Activated T-helper 1 cell treated with anti-CD3 and anti-CD28 coated beads, Interleukin-12 subunit alpha, Interleukin-12 subunit beta, Interleukin-2, Interleukin-4 antibody, amounts not matched to agents 30 ng/mL and 10 ng/mL and 1 ng/mL, durations not matched to agents 14 hours and 24 hours and 36 hours (primary cell): ENCODE measurements at regions of chr13 and their contacts with region 1.

Region 1: DNA sequence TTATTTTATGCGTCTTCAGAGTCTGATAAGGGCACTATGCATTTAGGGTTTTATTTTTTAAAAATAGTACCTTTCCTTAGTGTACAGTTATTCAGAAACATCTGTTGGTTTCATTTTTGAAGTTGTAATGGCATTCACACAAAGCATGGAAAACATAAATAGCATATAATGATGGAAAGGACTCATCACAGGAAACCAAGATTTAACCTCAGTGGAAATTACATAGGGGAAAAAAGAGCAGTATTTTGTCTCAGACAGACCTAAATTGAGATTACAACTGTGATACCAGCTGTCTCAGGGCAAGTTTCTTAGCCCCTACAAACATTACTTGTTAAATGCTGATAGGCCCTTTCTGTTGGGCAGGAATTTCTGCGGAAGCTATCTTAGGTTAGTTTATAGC is 57.2 kb downstream of the NHLRC3 start:
- DNase-seq: no peak
- H3K4me3 Mint-ChIP-seq: peak overlapping the region; percentile 68
- H3K27ac Mint-ChIP-seq: peak overlapping the region; percentile 92
- H3K4me1 Mint-ChIP-seq: peaks cover 35% of the 10 kb centered on the region
- H3K27me3 Mint-ChIP-seq: no peaks in the 10 kb centered on the region

Region 2: GRCh38 chr13:37695200-37695599 is 1400.3 kb before region 1 on chr13:
- intact Hi-C with region 1: no loop called
- DNase-seq: no peak
- H3K4me3 Mint-ChIP-seq: no peak overlapping the region
- H3K27ac Mint-ChIP-seq: no peak overlapping the region
- H3K4me1 Mint-ChIP-seq: no peaks in the 10 kb centered on the region
- H3K27me3 Mint-ChIP-seq: no peaks in the 10 kb centered on the region

Region 3: GRCh38 chr13:38349390-38350113 is 745.9 kb before region 1 on chr13 and contains the start of gene UFM1:
- intact Hi-C with region 1: loop called (anchors 5 kb)
- DNase-seq: peak; percentile 81
- H3K4me3 Mint-ChIP-seq: peak within 1 kb of the TSS; percentile 98
- H3K27ac Mint-ChIP-seq: peak within 1 kb of the TSS; percentile 100
- H3K4me1 Mint-ChIP-seq: peaks cover 36% of the 10 kb centered on the region
- H3K27me3 Mint-ChIP-seq: peaks cover 3% of the 10 kb centered on the region
- total RNA-seq, gene UFM1: 66.9 and 71.3 TPM in 2 replicates

Region 4: DNA sequence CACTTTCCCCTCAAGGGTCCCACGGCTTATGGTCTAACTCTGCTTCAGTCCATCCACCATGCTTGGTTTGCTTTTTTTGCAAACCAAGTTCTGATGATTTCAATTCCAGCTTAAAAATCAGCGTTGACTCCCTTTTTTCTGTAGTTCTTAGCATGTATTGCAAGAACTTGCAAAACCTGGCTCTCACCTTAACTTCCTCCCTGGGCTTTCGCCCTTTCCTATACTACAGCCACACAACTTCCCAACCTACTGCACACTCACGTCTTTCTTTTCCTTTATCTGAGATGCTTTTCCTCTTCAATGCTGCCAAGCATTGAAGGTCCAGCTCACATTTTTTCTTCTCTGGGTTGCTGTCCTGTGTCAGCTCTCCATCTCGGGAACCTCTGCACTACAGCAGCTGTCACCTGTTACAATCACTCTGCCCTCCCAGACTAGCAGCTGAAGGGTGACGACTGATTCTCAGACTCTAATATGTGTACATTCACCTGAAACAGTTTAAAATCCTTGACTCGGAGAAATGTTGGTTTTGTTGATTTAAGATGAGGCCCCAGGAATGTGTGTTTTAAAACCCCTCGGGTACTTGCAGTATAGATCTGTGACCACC is 265.0 kb before region 1 on chr13:
- intact Hi-C with region 1: no loop called
- DNase-seq: no peak
- H3K4me3 Mint-ChIP-seq: no peak overlapping the region
- H3K27ac Mint-ChIP-seq: no peak overlapping the region
- H3K4me1 Mint-ChIP-seq: no peaks in the 10 kb centered on the region
- H3K27me3 Mint-ChIP-seq: no peaks in the 10 kb centered on the region

Region 5: GRCh38 chr13:39062004-39062403 is 33.5 kb before region 1 on chr13:
- intact Hi-C with region 1: no loop called
- DNase-seq: no peak
- H3K4me3 Mint-ChIP-seq: no peak overlapping the region
- H3K27ac Mint-ChIP-seq: no peak overlapping the region
- H3K4me1 Mint-ChIP-seq: no peaks in the 10 kb centered on the region
- H3K27me3 Mint-ChIP-seq: no peaks in the 10 kb centered on the region

Region 6: GRCh38 chr13:39132286-39133230 is 37.1 kb after region 1 on chr13:
- intact Hi-C with region 1: loop called (anchors 5 kb)
- DNase-seq: no peak
- H3K4me3 Mint-ChIP-seq: no peak overlapping the region
- H3K27ac Mint-ChIP-seq: no peak overlapping the region
- H3K4me1 Mint-ChIP-seq: no peaks in the 10 kb centered on the region
- H3K27me3 Mint-ChIP-seq: peaks cover 2% of the 10 kb centered on the region

Region 7: GRCh38 chr13:39196958-39197646 is 101.6 kb after region 1 on chr13:
- intact Hi-C with region 1: loop called (anchors 1 kb)
- DNase-seq: no peak
- H3K4me3 Mint-ChIP-seq: no peak overlapping the region
- H3K27ac Mint-ChIP-seq: peak overlapping the region; percentile 59
- H3K4me1 Mint-ChIP-seq: peaks cover 13% of the 10 kb centered on the region
- H3K27me3 Mint-ChIP-seq: no peaks in the 10 kb centered on the region

Region 8: DNA sequence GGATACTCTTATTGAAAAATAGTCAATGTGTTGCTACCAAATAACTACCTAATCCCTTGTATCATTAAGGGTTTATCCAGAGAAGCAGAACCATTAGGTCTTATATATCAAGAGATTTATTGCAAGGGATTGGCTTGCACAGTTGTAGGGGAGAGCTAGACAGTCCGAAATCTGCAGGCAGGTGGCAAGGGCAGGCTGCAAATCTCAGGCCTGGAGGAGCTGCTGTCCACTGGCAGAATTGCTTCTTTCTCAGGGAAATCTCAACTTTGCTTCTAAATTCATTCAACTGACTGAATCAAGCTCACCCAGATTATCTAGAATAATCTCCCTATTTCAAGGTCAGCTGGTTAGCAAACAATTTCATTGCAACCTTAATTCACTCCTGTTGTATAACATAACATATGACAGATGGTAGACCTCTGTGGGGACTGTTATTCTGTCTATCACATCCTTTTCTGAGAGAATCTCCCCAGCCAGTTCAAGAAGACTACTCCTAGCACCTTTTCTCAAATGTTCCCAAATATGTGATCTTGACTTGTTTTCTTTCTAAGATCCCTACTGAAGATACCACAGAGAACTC is 137.0 kb after region 1 on chr13:
- intact Hi-C with region 1: no loop called
- DNase-seq: no peak
- H3K4me3 Mint-ChIP-seq: no peak overlapping the region
- H3K27ac Mint-ChIP-seq: no peak overlapping the region
- H3K4me1 Mint-ChIP-seq: no peaks in the 10 kb centered on the region
- H3K27me3 Mint-ChIP-seq: peaks cover 8% of the 10 kb centered on the region

Region 9: DNA sequence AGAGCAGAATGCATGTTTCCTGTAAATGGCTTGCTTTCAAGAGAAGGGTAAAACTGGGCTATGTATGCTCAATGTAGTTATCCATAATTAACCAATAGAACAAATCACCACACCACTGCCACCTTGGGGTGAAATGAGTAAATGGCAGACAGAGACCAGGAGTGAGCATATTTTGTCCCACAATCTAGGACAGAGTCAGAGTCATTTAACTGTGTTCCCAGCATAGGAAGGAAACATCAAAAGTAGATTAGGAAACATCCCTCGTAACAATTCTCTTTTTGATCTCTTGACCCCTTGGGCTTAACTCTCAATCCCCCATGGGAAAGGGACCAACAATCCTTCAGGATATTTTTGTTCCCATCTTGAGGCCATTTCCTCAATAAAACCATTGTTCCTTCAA is 167.5 kb after region 1 on chr13:
- intact Hi-C with region 1: loop called (anchors 1 kb)
- DNase-seq: peak; percentile 14
- H3K4me3 Mint-ChIP-seq: no peak overlapping the region
- H3K27ac Mint-ChIP-seq: no peak overlapping the region
- H3K4me1 Mint-ChIP-seq: peaks cover 9% of the 10 kb centered on the region
- H3K27me3 Mint-ChIP-seq: peaks cover 6% of the 10 kb centered on the region

Region 10: GRCh38 chr13:40770934-40771618 is 1675.6 kb after region 1 on chr13 and contains the start of gene MRPS31:
- intact Hi-C with region 1: loop called (anchors 10 kb)
- DNase-seq: peak; percentile 93
- H3K4me3 Mint-ChIP-seq: peak within 1 kb of the TSS; percentile 99
- H3K27ac Mint-ChIP-seq: peak within 1 kb of the TSS; percentile 98
- H3K4me1 Mint-ChIP-seq: peaks cover 29% of the 10 kb centered on the region
- H3K27me3 Mint-ChIP-seq: no peaks in the 10 kb centered on the region
- total RNA-seq, gene MRPS31: 41.6 and 42.6 TPM in 2 replicates